ENCODE measurements at regions of chr2 and their contacts with region 1.

Region 1: GRCh38 chr2:151828143-151828889 is at the start of gene ARL5A:
- DNase-seq: peak; percentile 99
- ATAC-seq: peak; percentile 93
- H3K4me3 ChIP-seq: peak within 1 kb of the TSS; percentile 69 to 98 (median 94)
- H3K4me3 Mint-ChIP-seq: peak within 1 kb of the TSS; percentile 86
- H3K27ac ChIP-seq: peak within 1 kb of the TSS; percentile 76 to 87
- H3K27ac Mint-ChIP-seq: peak within 1 kb of the TSS; percentile 93
- H3K4me1 ChIP-seq: peaks cover 20 to 29% of the 10 kb centered on the region in 2 donors
- H3K4me1 Mint-ChIP-seq: peaks cover 51% of the 10 kb centered on the region
- H3K27me3 ChIP-seq: no peaks in the 10 kb centered on the region
- H3K27me3 Mint-ChIP-seq: no peaks in the 10 kb centered on the region
- CTCF ChIP-seq: no peak
- total RNA-seq, gene ARL5A: 54.1 and 60.5 TPM in 2 replicates

Region 2: DNA sequence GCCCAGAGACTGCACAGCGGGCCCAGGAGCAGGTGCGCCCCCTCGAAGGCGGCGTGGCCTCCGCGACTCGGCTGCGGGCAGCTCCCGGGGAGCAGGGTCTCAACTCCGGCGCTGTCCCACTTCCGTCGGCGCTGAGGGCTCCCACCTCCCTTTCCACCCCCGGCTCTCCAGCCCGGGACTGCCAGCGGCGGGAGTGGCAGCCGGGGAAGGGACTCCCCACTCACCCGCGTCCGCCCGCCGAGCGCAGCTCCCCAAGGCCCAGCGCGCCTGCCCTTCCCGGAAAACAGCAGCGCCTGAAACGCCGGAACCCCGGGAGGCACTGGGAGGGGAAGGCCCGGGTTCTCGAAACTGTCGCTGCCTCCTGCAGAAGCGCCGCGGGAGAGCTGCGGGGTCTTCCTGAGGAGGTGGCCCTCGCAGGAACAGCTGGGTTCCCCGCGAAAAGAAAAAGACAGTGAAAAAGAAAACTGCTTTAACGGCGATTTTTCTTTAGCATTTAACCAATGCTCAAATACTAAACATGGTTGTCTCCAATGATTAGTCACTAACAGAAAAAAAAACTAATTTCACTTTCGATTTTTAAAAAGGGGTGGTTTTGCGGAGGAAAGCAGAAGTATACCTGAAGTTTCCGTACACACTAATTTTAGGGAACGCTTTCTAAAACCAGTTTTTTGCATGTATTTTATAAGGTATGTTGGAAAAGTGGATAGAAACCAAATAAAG is 538.8 kb before region 1 on chr2 and contains the start of gene NMI:
- CTCF ChIA-PET with region 1: no interaction called
- POLR2A ChIA-PET with region 1: no interaction called
- intact Hi-C with region 1: loop called (anchors 5 kb)
- DNase-seq: peak; percentile 85
- ATAC-seq: peak; percentile 76
- H3K4me3 ChIP-seq: peak within 1 kb of the TSS; percentile 75 to 97 (median 92)
- H3K4me3 Mint-ChIP-seq: peak within 1 kb of the TSS; percentile 94
- H3K27ac ChIP-seq: peak within 1 kb of the TSS; percentile 95 to 97
- H3K27ac Mint-ChIP-seq: peak within 1 kb of the TSS; percentile 97
- H3K4me1 ChIP-seq: peaks cover 27 to 31% of the 10 kb centered on the region in 2 donors
- H3K4me1 Mint-ChIP-seq: peaks cover 39% of the 10 kb centered on the region
- H3K27me3 ChIP-seq: no peaks in the 10 kb centered on the region
- H3K27me3 Mint-ChIP-seq: no peaks in the 10 kb centered on the region
- CTCF ChIP-seq: no peak
- total RNA-seq, gene NMI: 28.5 and 34.0 TPM in 2 replicates

Region 3: DNA sequence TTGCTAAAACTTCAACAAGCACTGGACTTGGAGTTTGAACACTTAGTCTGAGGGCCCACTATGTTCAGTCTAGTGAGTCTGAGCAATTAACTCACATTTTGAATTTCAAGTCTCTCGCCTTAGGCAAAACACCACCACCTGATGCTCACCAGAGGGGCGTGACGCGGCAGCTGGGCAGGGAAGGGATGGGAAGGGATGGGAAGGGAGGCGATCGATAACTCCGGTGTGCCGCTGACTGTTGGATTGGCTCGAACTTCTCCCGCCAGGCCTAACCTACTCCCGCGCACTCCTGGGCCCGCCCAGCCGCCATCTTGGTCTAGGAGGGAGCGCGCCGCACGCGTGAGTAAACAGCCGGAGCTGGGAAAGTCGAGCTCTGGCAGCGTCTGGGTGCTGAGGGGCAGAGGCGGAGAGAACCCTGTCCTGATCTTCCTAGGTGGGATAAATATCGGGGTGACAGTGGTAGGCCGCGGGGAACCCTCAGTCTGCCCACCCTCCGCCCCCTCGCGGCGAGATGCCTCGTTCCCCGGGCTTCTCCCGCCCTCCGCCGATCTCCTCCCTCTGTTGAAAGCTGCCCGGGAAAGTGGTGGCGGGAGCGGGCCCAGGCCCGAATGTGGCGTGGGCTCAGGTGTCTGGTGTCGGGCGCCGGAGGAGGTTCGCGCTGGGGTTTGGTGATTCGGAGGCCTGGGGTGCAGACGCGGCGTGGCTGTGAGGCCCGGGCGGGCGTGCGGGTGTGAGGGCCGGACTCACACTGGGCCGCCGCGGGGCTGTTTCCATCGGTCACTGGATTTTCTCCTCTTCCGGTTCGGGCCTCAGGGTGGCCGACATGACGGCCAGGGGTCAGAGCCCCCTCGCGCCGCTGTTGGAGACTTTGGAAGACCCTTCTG is 418.5 kb before region 1 on chr2 and contains the start of gene RIF1:
- CTCF ChIA-PET with region 1: no interaction called
- POLR2A ChIA-PET with region 1: no interaction called
- intact Hi-C with region 1: loop called (anchors 5 kb)
- DNase-seq: peak; percentile 83
- ATAC-seq: peak; percentile 88
- H3K4me3 ChIP-seq: peak within 1 kb of the TSS; percentile 70 to 96 (median 95)
- H3K4me3 Mint-ChIP-seq: peak within 1 kb of the TSS; percentile 90
- H3K27ac ChIP-seq: peak within 1 kb of the TSS; percentile 78 to 93
- H3K27ac Mint-ChIP-seq: peak within 1 kb of the TSS; percentile 82
- H3K4me1 ChIP-seq: peaks cover 6 to 14% of the 10 kb centered on the region in 2 donors
- H3K4me1 Mint-ChIP-seq: peaks cover 19% of the 10 kb centered on the region
- H3K27me3 ChIP-seq: no peaks in the 10 kb centered on the region
- H3K27me3 Mint-ChIP-seq: no peaks in the 10 kb centered on the region
- CTCF ChIP-seq: peak; percentile 80
- total RNA-seq, gene RIF1: 60.5 and 65.5 TPM in 2 replicates

Region 4: GRCh38 chr2:151638191-151638933 is 190.0 kb before region 1 on chr2:
- CTCF ChIA-PET with region 1: interaction called, 3 read pairs
- POLR2A ChIA-PET with region 1: interaction called, 4 read pairs
- intact Hi-C with region 1: loop called (anchors 1 kb)
- DNase-seq: peak; percentile 62
- ATAC-seq: peak; percentile 15
- H3K4me3 ChIP-seq: no peak overlapping the region
- H3K4me3 Mint-ChIP-seq: peak overlapping the region; percentile 77
- H3K27ac ChIP-seq: peak overlapping the region; percentile 78 to 89
- H3K27ac Mint-ChIP-seq: peak overlapping the region; percentile 93
- H3K4me1 ChIP-seq: peaks cover 22 to 26% of the 10 kb centered on the region in 2 donors
- H3K4me1 Mint-ChIP-seq: peaks cover 28% of the 10 kb centered on the region
- H3K27me3 ChIP-seq: no peaks in the 10 kb centered on the region
- H3K27me3 Mint-ChIP-seq: no peaks in the 10 kb centered on the region
- CTCF ChIP-seq: no peak

Region 5: DNA sequence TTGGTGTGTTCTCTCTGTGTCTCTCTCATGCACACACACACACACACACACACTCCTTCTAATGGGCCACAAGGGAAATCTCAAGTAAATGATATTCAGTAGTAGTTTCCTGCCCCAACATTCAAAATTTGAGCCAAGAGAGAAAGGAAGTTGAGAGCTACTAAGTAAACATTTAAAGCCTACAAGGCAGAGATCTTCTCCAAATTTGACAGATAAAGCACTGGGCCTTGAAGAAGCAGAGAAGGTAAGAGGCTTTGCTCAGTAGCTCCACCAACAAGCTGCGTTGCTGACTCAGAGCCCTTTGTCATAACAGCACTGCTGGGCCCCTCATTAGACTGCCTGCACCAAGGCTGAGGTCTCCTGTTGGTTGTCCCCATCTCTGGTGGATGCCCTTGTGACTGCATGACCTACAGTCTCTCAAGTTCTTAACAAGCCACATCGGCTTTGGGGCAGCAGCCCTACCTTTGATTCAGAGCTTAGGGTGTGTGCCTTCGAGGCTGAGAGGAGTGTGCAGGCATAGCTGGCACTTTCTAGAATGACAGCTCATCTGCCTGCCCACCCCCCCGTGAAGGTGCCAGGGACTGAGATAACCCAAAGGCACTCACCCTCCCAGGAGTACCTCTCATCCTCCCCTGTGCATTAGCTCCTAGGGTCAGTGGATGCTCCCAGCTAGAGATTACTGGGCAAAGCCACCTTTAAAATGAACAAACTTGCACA is 61.7 kb before region 1 on chr2:
- CTCF ChIA-PET with region 1: interaction called, 6 read pairs
- POLR2A ChIA-PET with region 1: interaction called, 6 read pairs
- intact Hi-C with region 1: loop called (anchors 1 kb)
- DNase-seq: peak; percentile 66
- ATAC-seq: peak; percentile 62
- H3K4me3 ChIP-seq: peak overlapping the region in 2 of 5 experiments; percentile 8 to 40
- H3K4me3 Mint-ChIP-seq: peak overlapping the region; percentile 69
- H3K27ac ChIP-seq: peak overlapping the region; percentile 79 to 89
- H3K27ac Mint-ChIP-seq: peak overlapping the region; percentile 93
- H3K4me1 ChIP-seq: peaks cover 85 to 90% of the 10 kb centered on the region in 2 donors
- H3K4me1 Mint-ChIP-seq: peaks cover 87% of the 10 kb centered on the region
- H3K27me3 ChIP-seq: no peaks in the 10 kb centered on the region
- H3K27me3 Mint-ChIP-seq: no peaks in the 10 kb centered on the region
- CTCF ChIP-seq: no peak

Region 6: DNA sequence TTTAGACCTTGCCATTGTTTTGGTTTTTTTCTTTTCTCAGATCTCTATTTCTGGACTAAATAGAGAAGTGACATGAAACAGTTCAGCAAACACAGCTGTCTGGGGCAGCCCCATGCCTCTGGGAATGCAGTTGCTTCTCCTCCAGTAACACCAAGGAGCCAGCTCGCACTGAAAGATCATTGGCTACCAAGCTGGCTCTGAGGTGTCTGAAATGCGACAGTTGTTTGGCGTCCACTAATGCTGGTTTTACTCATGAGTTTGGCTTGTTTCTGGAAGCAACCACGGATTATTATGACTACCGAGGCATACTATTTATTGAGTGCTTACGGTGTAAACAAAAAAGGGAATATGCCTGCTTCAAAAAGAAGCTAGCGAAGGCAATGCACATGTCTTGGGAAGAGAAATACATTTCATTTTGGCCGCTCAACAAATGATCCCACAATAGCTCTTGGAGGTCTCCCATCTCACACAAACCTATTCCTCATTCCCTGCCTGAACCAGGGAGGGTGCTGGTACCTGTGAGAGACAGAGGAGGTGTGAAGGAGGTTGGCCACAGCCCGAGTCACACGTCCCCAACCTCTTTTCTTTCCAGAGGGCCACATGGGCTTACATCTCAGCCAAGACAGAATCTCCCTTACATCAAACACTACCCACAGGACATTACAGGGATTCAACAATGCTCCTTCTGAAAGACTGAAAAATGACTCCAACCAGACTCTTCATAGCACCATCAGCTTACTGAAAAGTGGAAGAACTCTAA is 56.5 kb before region 1 on chr2:
- CTCF ChIA-PET with region 1: interaction called, 6 read pairs
- POLR2A ChIA-PET with region 1: interaction called, 5 read pairs
- intact Hi-C with region 1: loop called (anchors 1 kb)
- DNase-seq: peak; percentile 93
- ATAC-seq: peak; percentile 90
- H3K4me3 ChIP-seq: peak overlapping the region in 1 of 5 experiments; percentile 38
- H3K4me3 Mint-ChIP-seq: peak overlapping the region; percentile 76
- H3K27ac ChIP-seq: peak overlapping the region; percentile 95 to 96
- H3K27ac Mint-ChIP-seq: peak overlapping the region; percentile 93
- H3K4me1 ChIP-seq: peaks cover 78 to 80% of the 10 kb centered on the region in 2 donors
- H3K4me1 Mint-ChIP-seq: peaks cover 90% of the 10 kb centered on the region
- H3K27me3 ChIP-seq: no peaks in the 10 kb centered on the region
- H3K27me3 Mint-ChIP-seq: no peaks in the 10 kb centered on the region
- CTCF ChIP-seq: no peak

Region 7: GRCh38 chr2:151808258-151809072 is 19.9 kb before region 1 on chr2:
- CTCF ChIA-PET with region 1: interaction called, 9 read pairs
- POLR2A ChIA-PET with region 1: no interaction called
- intact Hi-C with region 1: loop called (anchors 2 kb)
- DNase-seq: peak; percentile 60
- ATAC-seq: peak; percentile 64
- H3K4me3 ChIP-seq: no peak overlapping the region
- H3K4me3 Mint-ChIP-seq: no peak overlapping the region
- H3K27ac ChIP-seq: peak overlapping the region in 1 of 2 donors; percentile 31
- H3K27ac Mint-ChIP-seq: no peak overlapping the region
- H3K4me1 ChIP-seq: peaks cover 4 to 11% of the 10 kb centered on the region in 2 donors
- H3K4me1 Mint-ChIP-seq: peaks cover 7% of the 10 kb centered on the region
- H3K27me3 ChIP-seq: no peaks in the 10 kb centered on the region
- H3K27me3 Mint-ChIP-seq: no peaks in the 10 kb centered on the region
- CTCF ChIP-seq: peak; percentile 94

Measured in B cell (primary cell).